GM18951 (cell line): ENCODE measurements at regions of chr3 and their contacts with region 1.

Region 1: GRCh38 chr3:149480325-149481017 is 6.0 kb downstream of the TM4SF4 start:
- POLR2A ChIP-seq: no peak

Region 2: GRCh38 chr3:148955544-148956346 is 524.7 kb before region 1 on chr3:
- in situ Hi-C with region 1: loop called (anchors 25 kb)
- POLR2A ChIP-seq: no peak

Region 3: DNA sequence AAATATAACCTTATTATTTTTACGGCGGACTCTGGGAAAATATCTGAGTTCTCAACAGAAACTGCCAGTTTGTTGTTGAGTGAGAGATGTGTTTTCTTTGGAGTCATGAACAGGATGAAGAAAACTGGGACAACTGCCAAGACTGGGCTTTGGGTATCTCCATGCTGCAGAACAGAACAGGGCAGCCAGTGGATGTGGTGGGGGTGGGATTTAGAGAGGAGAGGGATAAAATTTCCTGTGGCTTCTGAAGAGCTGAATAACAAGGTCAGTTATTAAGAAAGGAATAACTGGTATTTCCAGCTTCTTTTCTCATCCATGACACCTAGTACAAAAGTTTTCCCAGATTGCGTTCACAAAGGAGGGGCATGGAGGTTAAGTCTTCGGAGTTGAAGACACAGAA is 84.7 kb before region 1 on chr3:
- in situ Hi-C with region 1: loop called (anchors 5 kb)
- POLR2A ChIP-seq: no peak